Caco-2 (cell line): ENCODE measurements at regions of chr13 and their contacts with region 1.

Region 1: DNA sequence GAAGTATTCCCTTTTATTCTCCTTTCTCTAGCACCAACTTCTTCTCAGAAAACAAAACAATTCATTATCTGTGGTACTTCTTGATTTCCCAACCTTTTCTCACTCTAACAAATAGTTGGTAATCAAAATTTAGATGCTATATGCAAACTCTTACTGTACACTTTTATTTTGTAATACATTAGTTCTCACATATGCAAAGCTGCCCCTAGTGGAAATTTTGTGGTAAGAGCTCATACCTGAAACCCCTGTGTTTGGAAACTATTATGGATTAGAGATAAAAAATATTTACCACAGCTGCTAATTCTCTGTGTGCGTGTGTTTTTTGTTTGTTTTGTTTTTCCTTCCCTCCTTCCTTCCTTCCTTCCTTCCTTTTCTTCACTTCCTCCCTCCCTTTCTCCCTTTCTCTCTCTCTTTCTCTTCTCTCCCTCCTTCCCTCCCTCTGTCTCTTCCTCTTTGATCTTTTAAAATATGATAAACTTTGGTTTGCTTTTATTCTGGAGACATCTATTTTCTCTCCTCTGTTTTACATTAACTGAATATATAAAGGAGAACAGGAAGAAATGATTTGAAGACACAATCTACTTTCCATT is 537.4 kb downstream of the SLITRK6 start:
- DNase-seq: no peak
- H3K4me3 ChIP-seq: no peak overlapping the region
- H3K4me3 Mint-ChIP-seq: no peak overlapping the region
- H3K27ac Mint-ChIP-seq: no peak overlapping the region
- H3K4me1 ChIP-seq: no peaks in the 10 kb centered on the region
- H3K4me1 Mint-ChIP-seq: peaks cover 22% of the 10 kb centered on the region
- H3K27me3 ChIP-seq: no peaks in the 10 kb centered on the region
- H3K27me3 Mint-ChIP-seq: no peaks in the 10 kb centered on the region
- CTCF ChIP-seq: peak; percentile 58 to 61

Region 2: GRCh38 chr13:85806553-85807175 is 544.8 kb after region 1 on chr13:
- CTCF ChIA-PET with region 1: no interaction called
- POLR2A ChIA-PET with region 1: no interaction called
- intact Hi-C with region 1: loop called (anchors 5 kb)
- DNase-seq: peak in 1 of 2 experiments; percentile 59
- H3K4me3 ChIP-seq: no peak overlapping the region
- H3K4me3 Mint-ChIP-seq: no peak overlapping the region
- H3K27ac Mint-ChIP-seq: no peak overlapping the region
- H3K4me1 ChIP-seq: no peaks in the 10 kb centered on the region
- H3K4me1 Mint-ChIP-seq: no peaks in the 10 kb centered on the region
- H3K27me3 ChIP-seq: no peaks in the 10 kb centered on the region
- H3K27me3 Mint-ChIP-seq: no peaks in the 10 kb centered on the region
- CTCF ChIP-seq: peak; percentile 56 to 81